Right ventricle myocardium inferior (tissue), 1 donor: ENCODE measurements at regions of chr19 and their contacts with region 1.

Region 1: DNA sequence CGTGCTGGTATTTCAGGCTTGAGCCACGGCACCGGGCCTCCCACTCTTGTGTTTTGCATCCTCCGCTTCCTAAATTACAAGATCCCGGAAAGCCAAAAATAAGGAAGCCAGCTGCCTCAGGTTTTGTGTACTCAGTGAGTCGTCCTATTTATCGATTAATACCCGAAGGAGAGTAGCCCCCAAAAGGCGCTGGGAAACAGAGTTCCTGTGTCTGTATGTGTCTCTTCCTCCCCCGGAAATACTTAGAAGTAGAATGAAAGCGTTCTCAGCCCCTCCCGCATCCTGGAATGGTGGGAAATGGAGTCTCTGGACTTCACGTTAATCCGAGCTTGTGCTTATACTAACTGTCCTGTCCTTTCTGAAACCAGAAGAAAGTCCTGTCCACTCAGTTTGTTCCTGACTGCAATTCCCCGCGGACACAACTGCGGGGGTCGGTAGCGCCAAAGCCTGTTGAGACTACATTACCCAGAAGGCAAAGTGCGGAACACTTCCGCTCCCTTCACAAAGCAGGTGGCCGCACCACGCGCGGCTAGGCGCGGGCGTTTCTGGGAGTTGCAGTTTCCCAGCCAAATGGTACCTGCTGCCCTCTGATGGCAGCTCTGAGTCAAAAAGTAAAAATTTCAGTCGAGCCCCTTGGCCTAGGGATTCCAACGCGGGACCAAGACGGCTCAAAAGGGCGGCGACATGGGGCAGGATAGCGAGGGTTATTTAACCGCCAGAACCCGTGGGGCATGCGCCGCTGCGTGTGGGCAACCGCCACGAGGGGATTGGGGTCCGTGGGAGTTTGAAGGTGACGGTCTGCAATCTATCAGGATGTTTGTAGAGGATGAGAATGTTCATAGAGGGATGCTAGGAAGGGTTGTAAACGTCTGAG is 2.2 kb upstream of the GSK3A start:
- DNase-seq: peak; percentile 98
- ATAC-seq: peak; percentile 39

Region 2: DNA sequence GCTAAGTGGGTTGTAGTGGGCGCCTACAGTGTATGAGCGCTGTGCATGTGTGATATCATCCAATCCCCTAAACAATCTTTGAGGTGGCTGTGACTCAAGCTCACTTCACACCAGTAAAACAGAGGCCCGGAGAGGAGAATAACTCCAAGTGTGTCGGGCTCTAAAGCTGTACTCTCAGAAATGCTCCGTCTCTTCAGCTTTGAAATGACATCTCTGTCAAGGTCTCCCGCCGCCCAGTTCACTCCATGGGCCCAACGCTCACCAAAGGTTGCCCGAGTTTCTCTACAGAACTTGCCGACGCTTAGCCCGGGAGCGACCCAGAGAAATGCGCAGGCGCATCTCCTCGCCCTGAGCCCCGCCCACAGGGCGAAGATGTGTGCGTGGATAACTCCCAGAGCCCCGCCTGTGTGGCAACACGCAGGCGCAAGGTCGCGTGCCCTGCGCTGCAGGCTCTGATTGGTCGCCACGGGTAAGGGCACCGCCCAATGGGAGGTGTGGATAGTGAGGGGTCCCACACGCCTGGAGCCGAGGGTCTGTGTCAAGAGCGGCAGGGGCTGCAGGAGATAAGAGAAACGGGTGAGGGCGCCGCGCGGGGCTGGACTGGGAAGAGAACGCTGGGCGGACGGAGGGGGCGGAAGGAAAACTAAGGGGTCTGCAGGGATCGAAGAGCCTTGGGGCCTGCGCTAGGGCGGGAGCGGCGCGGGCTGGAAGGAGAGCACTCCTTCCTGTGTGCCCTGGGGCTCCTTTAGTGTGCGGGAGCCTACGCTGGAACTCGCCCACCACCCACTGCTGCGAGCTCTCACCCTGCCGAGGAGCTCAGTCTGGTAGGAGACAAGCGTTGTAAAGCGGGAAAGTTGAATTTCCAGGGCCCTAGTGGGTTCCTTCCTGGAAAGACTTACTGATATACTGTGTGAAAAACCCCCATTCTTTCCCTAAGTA is 24.5 kb before region 1 on chr19 and contains the start of gene ZNF526:
- intact Hi-C with region 1: loop called (anchors 1 kb)
- DNase-seq: peak; percentile 98
- ATAC-seq: peak; percentile 94
- total RNA-seq, gene ZNF526: 6.1 TPM

Region 3: DNA sequence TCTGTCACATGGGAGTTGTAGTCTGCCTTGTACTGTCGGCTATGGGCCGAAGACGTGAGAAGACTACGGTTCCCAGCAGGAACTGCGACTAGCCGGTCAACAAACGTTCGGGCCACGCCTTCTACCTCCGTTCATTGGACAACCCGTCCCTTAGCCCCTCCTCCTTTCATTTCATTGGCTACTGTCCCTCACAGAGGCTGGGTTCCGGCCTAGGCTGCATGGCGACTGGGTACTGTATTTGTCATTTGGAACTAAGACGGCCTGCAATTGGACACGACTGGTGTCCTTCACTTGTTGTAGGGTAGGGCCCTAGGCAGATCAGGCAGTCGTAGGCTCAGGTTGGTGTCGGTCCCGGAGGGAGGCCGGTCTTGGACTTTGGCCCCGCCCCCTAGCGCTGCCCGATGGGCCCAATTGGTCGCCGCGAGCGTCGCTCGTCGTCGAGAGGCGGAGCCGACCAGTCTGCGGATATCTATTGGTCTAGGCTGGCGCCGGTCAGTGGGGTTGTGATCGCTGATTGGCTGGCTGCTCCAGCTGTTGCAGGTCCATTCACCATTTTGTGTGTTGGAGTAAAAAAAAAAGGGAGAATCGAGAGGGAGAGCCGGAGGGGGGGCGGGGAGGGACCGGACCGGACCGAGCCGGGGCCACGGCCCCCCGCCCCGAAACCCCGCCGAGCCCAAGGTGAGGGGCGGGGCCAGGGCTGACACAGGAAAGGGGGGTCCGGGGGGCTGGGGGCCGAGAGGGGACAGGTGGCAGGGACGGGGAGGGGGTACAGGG is 24.3 kb after region 1 on chr19 and contains the start of gene CIC:
- intact Hi-C with region 1: loop called (anchors 2 kb)
- DNase-seq: peak; percentile 99
- ATAC-seq: peak; percentile 93
- total RNA-seq, gene CIC: 34.6 TPM

Region 4: GRCh38 chr19:42280192-42281145 is 35.9 kb after region 1 on chr19:
- intact Hi-C with region 1: loop called (anchors 1 kb)
- DNase-seq: peak; percentile 95
- ATAC-seq: peak; percentile 71

Region 5: DNA sequence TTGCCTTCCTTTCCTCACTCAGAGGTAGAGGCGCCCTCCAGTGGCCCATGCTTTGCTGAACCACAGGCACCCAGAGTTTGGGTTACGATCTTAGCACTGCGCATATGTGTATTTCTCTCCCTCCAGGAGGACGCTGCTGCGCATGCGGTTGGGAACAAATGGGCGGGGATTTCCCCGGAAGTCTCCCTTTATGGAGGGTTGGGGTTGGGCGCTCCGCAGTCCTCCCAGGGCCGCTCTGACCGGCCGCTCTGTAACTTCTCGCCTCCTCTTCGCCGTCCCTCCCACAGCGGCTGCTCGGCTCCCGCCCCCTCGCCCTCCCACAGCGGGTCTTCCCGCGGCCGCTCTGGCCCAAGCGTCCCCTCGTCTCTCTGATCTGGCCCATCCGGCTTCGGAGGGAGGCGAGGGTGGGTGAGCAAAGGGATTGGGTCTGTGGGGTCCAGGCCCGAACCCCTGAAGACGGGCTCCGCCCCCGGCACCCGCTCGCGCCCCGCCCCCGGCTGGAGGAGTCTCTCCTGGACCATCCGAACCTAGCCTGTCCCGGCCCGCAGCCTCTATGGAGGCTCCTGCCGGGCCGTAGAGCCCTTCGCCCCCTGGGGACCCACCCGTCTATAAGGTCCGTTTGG is 80.8 kb after region 1 on chr19 and contains the start of gene MEGF8:
- intact Hi-C with region 1: loop called (anchors 2 kb)
- DNase-seq: peak; percentile 96
- ATAC-seq: peak; percentile 98
- total RNA-seq, gene MEGF8: 32.6 TPM

Region 6: GRCh38 chr19:42396381-42397262 is 152.0 kb after region 1 on chr19:
- intact Hi-C with region 1: loop called (anchors 10 kb)
- DNase-seq: peak; percentile 99
- ATAC-seq: peak; percentile 98

Region 7: GRCh38 chr19:42433503-42434260 is 189.1 kb after region 1 on chr19:
- intact Hi-C with region 1: loop called (anchors 5 kb)
- DNase-seq: peak; percentile 91
- ATAC-seq: peak; percentile 88